ENCODE measurements at regions of chr4 and their contacts with region 1.

Region 1: GRCh38 chr4:173168396-173169177 is at the start of gene GALNT7:
- DNase-seq: peak; percentile 83
- ATAC-seq: peak; percentile 57
- H3K4me3 Mint-ChIP-seq: peak within 1 kb of the TSS; percentile 92
- H3K27ac Mint-ChIP-seq: peak within 1 kb of the TSS; percentile 89
- H3K4me1 Mint-ChIP-seq: peaks cover 42% of the 10 kb centered on the region
- H3K27me3 Mint-ChIP-seq: no peaks in the 10 kb centered on the region
- total RNA-seq, gene GALNT7: 11.4 to 15.1 TPM

Region 2: DNA sequence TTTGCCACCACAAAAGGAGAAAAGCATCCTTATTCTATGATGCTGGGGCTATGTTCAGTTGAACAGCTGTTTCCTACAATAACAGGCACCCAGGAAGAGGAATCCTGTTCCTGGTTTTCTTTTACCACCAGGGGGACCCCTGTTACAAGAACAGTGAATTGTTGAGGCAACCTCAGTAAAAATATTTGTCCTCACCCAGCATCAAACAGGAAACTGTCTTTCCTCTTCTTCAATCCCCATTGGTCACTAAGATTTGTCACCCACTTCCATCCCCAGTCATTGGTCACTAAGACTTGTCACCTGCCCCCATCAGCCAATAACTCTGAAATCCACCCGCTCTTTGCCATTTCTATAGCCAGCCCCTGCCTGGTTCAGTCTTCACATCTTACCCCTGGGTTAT is 143.5 kb before region 1 on chr4:
- CTCF ChIA-PET with region 1: interaction called, 3 read pairs
- POLR2A ChIA-PET with region 1: no interaction called
- intact Hi-C with region 1: loop called in 1 of 2 experiments (anchors 10 kb)
- DNase-seq: peak; percentile 26
- ATAC-seq: peak; percentile 65
- H3K4me3 Mint-ChIP-seq: no peak overlapping the region
- H3K27ac Mint-ChIP-seq: no peak overlapping the region
- H3K4me1 Mint-ChIP-seq: peaks cover 4% of the 10 kb centered on the region
- H3K27me3 Mint-ChIP-seq: no peaks in the 10 kb centered on the region

Region 3: GRCh38 chr4:173039617-173040577 is 128.7 kb before region 1 on chr4:
- CTCF ChIA-PET with region 1: no interaction called
- POLR2A ChIA-PET with region 1: no interaction called
- intact Hi-C with region 1: no loop called
- DNase-seq: no peak
- ATAC-seq: no peak
- H3K4me3 Mint-ChIP-seq: no peak overlapping the region
- H3K27ac Mint-ChIP-seq: no peak overlapping the region
- H3K4me1 Mint-ChIP-seq: no peaks in the 10 kb centered on the region
- H3K27me3 Mint-ChIP-seq: peaks cover 11% of the 10 kb centered on the region

Region 4: DNA sequence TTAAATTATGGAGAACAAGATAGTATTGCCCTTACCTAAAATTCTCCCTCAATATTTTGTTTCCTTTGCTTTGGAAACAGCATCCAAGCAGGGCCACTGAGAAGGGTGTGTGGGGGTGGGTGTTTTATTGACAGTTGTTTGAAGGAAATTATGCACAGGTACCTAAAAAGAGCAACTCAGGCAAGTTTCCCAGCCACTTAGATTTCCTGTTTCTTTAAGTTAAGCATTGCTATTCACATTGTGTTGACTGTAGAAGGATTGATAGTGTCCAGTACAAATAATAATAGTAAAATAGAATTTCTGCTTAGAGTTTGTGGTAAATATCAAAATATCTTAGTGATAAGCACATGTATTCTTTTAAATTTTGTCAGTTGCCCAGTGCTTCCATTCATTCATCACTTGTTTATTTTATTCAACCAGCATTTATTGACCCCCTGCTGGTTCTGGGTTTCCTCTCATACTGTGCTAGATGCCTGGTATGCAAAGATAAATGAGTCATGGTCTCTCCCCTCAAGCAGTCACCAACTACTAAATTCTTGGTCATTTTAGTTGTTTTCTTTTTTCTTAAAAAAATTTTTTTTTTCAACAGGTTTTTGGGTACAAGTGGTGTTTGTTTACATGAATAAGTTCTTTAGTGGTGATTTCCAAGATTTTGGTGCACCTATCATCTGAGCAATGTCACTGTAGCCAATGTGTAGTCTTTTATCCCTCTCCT is 50.0 kb after region 1 on chr4:
- CTCF ChIA-PET with region 1: no interaction called
- POLR2A ChIA-PET with region 1: no interaction called
- intact Hi-C with region 1: no loop called
- DNase-seq: no peak
- ATAC-seq: peak; percentile 49
- H3K4me3 Mint-ChIP-seq: no peak overlapping the region
- H3K27ac Mint-ChIP-seq: no peak overlapping the region
- H3K4me1 Mint-ChIP-seq: peaks cover 31% of the 10 kb centered on the region
- H3K27me3 Mint-ChIP-seq: no peaks in the 10 kb centered on the region

Region 5: GRCh38 chr4:173252024-173252935 is 83.7 kb after region 1 on chr4:
- CTCF ChIA-PET with region 1: interaction called, 8 read pairs
- POLR2A ChIA-PET with region 1: interaction called, 3 read pairs
- intact Hi-C with region 1: loop called (anchors 1 to 2 kb)
- DNase-seq: peak; percentile 58
- ATAC-seq: peak; percentile 92
- H3K4me3 Mint-ChIP-seq: no peak overlapping the region
- H3K27ac Mint-ChIP-seq: no peak overlapping the region
- H3K4me1 Mint-ChIP-seq: peaks cover 14% of the 10 kb centered on the region
- H3K27me3 Mint-ChIP-seq: no peaks in the 10 kb centered on the region

Region 6: DNA sequence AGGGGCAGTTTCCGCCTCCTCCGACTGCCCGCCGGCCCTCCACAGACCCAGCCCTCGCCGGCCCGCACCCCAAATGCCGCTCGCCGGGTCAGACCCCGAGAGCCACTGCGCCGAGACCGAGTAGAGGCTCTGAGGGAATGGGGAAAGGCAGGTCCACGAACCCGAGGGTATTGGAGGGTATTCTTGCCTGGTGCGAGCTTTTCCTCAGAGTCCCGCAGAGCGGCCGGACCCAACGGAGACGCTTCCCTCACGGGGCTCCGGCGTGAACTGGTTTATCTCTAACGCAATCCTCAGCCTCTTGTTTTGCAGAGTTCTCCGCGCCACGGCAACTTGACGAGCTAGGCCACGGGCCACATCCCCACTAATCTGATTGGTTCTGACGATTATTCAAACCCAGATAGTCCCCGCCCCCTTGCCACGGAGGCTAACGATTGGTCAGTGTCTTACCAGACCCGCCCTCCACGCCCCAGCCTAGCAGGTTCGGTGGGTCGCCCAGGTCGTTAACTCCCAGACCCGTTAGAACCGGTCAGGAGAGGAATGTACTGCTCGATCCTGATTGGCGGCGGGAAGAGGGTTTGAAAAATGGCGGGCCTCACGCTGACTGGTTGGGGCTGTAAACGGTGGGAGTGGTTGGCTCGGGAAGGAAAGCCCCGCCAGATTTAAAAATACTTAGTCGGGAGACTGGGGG is 165.6 kb after region 1 on chr4 and contains the start of gene HMGB2:
- CTCF ChIA-PET with region 1: no interaction called
- POLR2A ChIA-PET with region 1: interaction called, 3 read pairs
- intact Hi-C with region 1: loop called (anchors 1 to 5 kb)
- DNase-seq: peak; percentile 100
- ATAC-seq: peak; percentile 95
- H3K4me3 Mint-ChIP-seq: peak within 1 kb of the TSS; percentile 98
- H3K27ac Mint-ChIP-seq: peak within 1 kb of the TSS; percentile 99
- H3K4me1 Mint-ChIP-seq: peaks cover 14% of the 10 kb centered on the region
- H3K27me3 Mint-ChIP-seq: peaks cover 7% of the 10 kb centered on the region
- total RNA-seq, gene HMGB2: 608 to 661 TPM

Region 7: GRCh38 chr4:174282836-174283506 is 1114.4 kb after region 1 on chr4:
- CTCF ChIA-PET with region 1: no interaction called
- POLR2A ChIA-PET with region 1: no interaction called
- intact Hi-C with region 1: loop called in 1 of 2 experiments (anchors 5 kb)
- DNase-seq: peak; percentile 84
- ATAC-seq: peak; percentile 97
- H3K4me3 Mint-ChIP-seq: peak overlapping the region; percentile 98
- H3K27ac Mint-ChIP-seq: peak overlapping the region; percentile 100
- H3K4me1 Mint-ChIP-seq: peaks cover 64% of the 10 kb centered on the region
- H3K27me3 Mint-ChIP-seq: no peaks in the 10 kb centered on the region

Measured in activated CD4-positive, alpha-beta T cell treated with anti-CD3 and anti-CD28 coated beads for 36 hours (primary cell).